Posterior vena cava (tissue), 2 donors: ENCODE measurements at regions of chr7 and their contacts with region 1.

Region 1: DNA sequence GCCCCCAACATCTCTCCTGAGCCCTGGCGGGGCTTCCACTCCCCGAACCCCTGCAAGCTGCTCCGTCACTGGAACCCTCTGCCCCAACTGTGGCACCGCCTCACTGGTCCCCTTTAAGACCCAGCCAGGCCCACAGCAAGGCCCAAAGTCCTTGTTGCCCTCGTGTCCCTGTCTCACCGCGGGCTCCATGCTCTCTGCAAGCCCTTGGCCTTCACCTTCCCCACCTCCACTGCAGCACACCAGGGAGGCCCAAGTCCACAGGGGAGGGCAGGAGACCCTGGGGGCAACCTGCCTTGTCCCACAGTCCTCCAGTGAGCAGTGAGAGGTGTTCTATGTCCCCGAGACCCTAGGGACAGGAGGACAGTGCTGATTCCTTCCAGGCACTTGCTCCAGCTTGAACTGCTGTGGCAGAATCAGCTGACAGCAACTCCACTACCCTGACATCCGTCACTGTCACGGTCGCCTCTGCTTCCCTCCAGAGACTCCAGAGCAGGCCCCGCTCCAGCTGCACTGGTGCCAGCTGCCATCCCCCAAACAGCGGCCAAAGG is 105.3 kb downstream of the CYTH3 start:
- DNase-seq: no peak

Region 2: DNA sequence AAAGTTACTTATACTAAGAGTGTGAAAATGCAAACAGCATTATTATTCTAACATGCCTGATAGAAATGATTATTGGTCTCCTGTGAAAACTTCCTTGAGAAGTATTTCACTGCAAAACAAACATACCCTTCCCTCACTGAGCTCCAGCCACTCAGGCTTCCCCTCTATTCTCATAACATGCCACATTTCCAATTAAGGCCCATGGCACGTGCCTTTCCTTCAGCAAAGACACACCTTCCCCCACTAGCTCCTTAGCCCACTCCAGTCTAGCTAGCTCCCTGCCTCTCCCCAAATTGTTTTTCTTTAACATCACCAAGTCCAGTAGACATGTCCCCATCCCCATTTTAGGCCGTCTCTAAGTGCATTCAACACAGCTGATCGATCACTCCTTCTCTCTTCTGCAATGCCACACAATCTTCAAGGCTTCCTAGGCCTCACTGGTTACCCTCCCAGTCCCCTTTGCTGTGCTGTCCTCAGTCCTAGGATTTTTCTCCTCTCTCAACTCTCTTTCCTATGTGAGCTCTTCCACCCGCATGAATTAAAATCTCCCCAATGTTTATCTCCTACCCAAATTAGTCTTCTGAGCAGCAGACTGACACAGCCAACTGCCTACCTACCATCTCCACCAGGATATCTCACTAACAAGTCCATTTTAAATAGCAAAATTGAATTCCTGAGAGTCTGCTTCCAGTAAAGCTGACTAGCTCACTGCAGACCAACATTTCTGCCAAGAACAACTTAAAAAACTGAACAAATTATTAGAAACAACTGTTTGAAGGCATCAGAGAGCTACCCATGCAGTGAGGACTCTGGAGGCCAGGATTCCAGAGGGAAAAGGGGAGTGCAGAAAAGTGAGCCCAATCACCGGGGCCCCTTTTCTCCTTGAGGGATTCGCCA is 93.5 kb after region 1 on chr7:
- intact Hi-C with region 1: loop called (anchors 5 to 10 kb)
- DNase-seq: no peak